CD4-positive, alpha-beta memory T cell (primary cell): ENCODE measurements at regions of chr3 and their contacts with region 1.

Region 1: GRCh38 chr3:172332256-172333041 is 115.8 kb downstream of the GHSR start:
- DNase-seq: peak; percentile 40 to 57 (median 47)
- H3K4me3 ChIP-seq: no peak overlapping the region
- H3K4me3 Mint-ChIP-seq: no peak overlapping the region
- H3K27ac ChIP-seq: no peak overlapping the region
- H3K27ac Mint-ChIP-seq: peak overlapping the region in 1 of 7 donors; percentile 15
- H3K4me1 ChIP-seq: no peaks in the 10 kb centered on the region
- H3K4me1 Mint-ChIP-seq: peaks cover 0 to 7% (median 3%) of the 10 kb centered on the region in 4 donors
- H3K27me3 ChIP-seq: no peaks in the 10 kb centered on the region
- H3K27me3 Mint-ChIP-seq: no peaks in the 10 kb centered on the region

Region 2: DNA sequence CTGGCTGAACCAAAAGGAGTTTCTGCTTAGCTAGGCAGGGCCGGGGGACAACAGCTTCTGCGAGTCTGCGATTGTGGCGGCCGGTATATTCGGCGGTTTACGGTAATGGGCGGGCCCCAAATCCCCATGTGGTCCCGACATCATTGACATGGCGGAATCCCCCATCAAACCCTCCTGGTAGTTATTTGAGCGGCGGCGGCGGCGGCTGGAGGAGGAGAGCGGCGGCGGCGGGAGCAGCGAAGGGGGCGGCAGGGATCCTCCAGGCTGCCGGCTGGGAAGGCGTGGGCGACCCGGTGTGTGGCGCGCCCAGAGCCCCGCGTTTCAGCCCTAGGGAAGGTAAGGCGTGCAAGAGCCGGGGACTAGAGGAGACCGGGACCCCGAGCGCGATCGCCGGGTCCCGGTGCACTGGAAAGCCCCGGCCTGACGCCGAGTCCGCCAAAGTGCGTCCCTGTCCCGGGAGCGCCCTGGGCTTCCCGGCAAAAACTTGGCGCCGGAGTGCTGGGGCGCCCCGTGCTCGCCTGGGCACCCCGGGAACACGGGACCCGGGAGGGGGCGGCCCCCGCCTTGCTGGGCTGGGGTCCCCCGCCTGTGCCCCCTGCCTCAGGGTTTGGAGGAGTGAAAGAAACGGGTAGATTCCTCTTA is 292.9 kb before region 1 on chr3 and contains the start of gene FNDC3B:
- CTCF ChIA-PET with region 1: interaction called, 76 read pairs
- POLR2A ChIA-PET with region 1: interaction called, 3 read pairs
- intact Hi-C with region 1: loop called (anchors 1 kb)
- DNase-seq: peak; percentile 90 to 93 (median 91)
- H3K4me3 ChIP-seq: peak within 1 kb of the TSS; percentile 61 to 62
- H3K4me3 Mint-ChIP-seq: peak within 1 kb of the TSS; percentile 94 to 99 (median 97)
- H3K27ac ChIP-seq: peak within 1 kb of the TSS; percentile 92
- H3K27ac Mint-ChIP-seq: peak within 1 kb of the TSS; percentile 94 to 99 (median 96)
- H3K4me1 ChIP-seq: peaks cover 29% of the 10 kb centered on the region
- H3K4me1 Mint-ChIP-seq: peaks cover 25 to 58% (median 37%) of the 10 kb centered on the region in 4 donors
- H3K27me3 ChIP-seq: no peaks in the 10 kb centered on the region
- H3K27me3 Mint-ChIP-seq: no peaks in the 10 kb centered on the region
- total RNA-seq, gene FNDC3B: 18.0 to 18.2 TPM

Region 3: DNA sequence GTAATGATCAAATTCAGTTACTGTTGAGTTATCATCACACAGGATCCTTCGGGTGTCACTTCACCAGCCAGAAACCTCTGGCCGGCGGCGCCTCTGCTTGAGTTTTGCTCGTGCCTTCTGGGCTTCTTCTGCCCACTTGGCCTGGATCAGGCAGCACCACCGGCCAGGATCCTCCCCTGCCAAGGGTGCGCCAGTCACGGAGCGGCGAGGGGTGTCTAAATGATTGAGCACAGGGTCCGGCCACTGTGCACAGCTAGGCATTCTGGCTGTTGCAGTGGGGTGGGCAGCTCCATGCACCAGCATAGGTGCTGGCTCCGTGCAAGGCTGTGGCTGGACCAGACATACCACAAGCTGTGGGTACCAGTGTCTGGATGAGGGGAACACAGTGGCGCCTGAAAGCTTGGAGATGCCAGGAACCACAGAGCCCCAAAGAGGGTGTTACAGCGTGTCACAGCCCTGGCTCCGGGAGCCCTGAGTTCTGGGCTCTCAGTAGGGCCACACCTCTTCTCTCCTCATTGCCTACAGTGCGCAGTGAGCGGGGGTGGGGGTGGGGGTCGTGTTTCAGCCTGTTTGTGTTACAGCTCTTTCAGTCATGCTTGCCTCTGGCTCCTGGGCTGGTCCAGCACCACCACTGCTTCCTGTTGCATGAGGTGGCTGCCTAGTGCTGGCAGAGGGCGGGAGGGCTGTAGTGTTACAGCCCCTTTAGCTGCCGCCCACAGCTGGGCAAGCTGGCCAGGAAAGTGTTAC is 123.7 kb before region 1 on chr3:
- CTCF ChIA-PET with region 1: no interaction called
- POLR2A ChIA-PET with region 1: no interaction called
- intact Hi-C with region 1: no loop called
- DNase-seq: no peak
- H3K4me3 ChIP-seq: no peak overlapping the region
- H3K4me3 Mint-ChIP-seq: no peak overlapping the region
- H3K27ac ChIP-seq: no peak overlapping the region
- H3K27ac Mint-ChIP-seq: no peak overlapping the region
- H3K4me1 ChIP-seq: no peaks in the 10 kb centered on the region
- H3K4me1 Mint-ChIP-seq: peaks cover 2 to 5% (median 4%) of the 10 kb centered on the region in 4 donors
- H3K27me3 ChIP-seq: no peaks in the 10 kb centered on the region
- H3K27me3 Mint-ChIP-seq: no peaks in the 10 kb centered on the region

Region 4: DNA sequence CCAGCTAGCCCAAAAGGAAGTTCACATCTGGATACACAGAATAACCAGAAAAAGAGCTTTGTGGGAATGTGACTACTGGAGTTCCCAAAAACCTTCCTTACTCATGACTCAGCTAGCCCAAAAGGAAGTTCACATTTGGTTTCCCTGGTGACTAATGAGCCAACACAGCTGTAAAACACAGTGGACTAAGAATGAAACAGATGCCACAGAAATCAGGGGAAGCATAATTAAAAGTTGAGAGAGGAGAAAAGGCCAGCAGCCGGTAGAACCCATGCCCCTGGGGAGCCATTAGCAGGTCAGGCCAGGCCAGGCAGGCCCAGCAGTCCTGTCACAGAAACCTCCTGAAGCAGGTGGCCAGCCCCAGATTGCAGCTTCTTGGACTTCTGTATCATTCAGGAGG is 14.5 kb before region 1 on chr3:
- CTCF ChIA-PET with region 1: interaction called, 48 read pairs
- POLR2A ChIA-PET with region 1: no interaction called
- intact Hi-C with region 1: no loop called
- DNase-seq: no peak
- H3K4me3 ChIP-seq: no peak overlapping the region
- H3K4me3 Mint-ChIP-seq: no peak overlapping the region
- H3K27ac ChIP-seq: no peak overlapping the region
- H3K27ac Mint-ChIP-seq: no peak overlapping the region
- H3K4me1 ChIP-seq: no peaks in the 10 kb centered on the region
- H3K4me1 Mint-ChIP-seq: peaks cover 0 to 4% (median 1%) of the 10 kb centered on the region in 4 donors
- H3K27me3 ChIP-seq: no peaks in the 10 kb centered on the region
- H3K27me3 Mint-ChIP-seq: no peaks in the 10 kb centered on the region

Region 5: DNA sequence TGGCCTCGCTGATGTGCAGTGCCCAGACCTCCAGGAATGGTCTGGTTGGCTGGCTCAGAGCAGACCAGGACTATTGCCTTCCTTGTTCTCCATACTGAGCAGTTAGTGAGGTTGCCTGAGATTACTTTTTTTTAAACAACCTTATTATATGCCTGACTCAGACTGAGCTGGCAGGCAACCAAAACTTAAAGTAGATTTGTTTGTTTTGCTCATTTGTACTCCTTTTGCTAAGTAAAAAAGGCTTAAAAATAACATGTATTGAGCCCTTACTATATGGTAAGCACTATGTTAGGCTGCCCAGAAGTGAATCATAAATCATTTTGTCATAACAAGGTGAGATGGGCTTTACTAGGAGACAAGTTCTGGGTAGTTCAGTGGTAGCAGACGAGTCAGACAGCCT is 23.4 kb after region 1 on chr3:
- CTCF ChIA-PET with region 1: interaction called, 11 read pairs
- POLR2A ChIA-PET with region 1: no interaction called
- intact Hi-C with region 1: no loop called
- DNase-seq: no peak
- H3K4me3 ChIP-seq: no peak overlapping the region
- H3K4me3 Mint-ChIP-seq: no peak overlapping the region
- H3K27ac ChIP-seq: no peak overlapping the region
- H3K27ac Mint-ChIP-seq: no peak overlapping the region
- H3K4me1 ChIP-seq: no peaks in the 10 kb centered on the region
- H3K4me1 Mint-ChIP-seq: peaks cover 0 to 2% (median 0%) of the 10 kb centered on the region in 4 donors
- H3K27me3 ChIP-seq: no peaks in the 10 kb centered on the region
- H3K27me3 Mint-ChIP-seq: no peaks in the 10 kb centered on the region

Region 6: GRCh38 chr3:172437713-172438112 is 105.3 kb after region 1 on chr3:
- CTCF ChIA-PET with region 1: no interaction called
- POLR2A ChIA-PET with region 1: no interaction called
- intact Hi-C with region 1: no loop called
- DNase-seq: no peak
- H3K4me3 ChIP-seq: no peak overlapping the region
- H3K4me3 Mint-ChIP-seq: no peak overlapping the region
- H3K27ac ChIP-seq: no peak overlapping the region
- H3K27ac Mint-ChIP-seq: no peak overlapping the region
- H3K4me1 ChIP-seq: no peaks in the 10 kb centered on the region
- H3K4me1 Mint-ChIP-seq: no peaks in the 10 kb centered on the region
- H3K27me3 ChIP-seq: peaks cover 5% of the 10 kb centered on the region
- H3K27me3 Mint-ChIP-seq: peaks cover 28 to 32% of the 10 kb centered on the region in 2 donors

Region 7: DNA sequence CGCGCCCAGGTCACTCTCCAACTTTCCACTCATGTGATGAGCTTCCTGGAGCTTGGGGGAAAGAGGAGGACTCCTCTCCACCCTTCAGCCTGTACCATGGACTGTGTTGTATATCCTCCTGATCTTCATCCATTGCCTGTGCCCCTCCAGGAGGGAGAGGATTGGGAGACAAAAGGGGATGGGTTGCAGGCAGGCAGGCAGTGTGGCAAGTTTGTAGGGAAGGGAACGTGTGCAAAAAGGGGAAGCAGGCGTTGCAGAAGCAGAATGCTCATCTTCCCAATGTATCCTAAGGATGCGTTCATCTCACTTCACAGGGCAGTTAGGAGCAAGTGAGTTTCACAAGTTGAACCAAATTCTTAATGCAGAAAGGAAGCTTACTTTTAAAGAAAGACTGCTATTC is 143.9 kb after region 1 on chr3:
- CTCF ChIA-PET with region 1: interaction called, 9 read pairs
- POLR2A ChIA-PET with region 1: no interaction called
- intact Hi-C with region 1: loop called (anchors 2 kb)
- DNase-seq: no peak
- H3K4me3 ChIP-seq: peak overlapping the region in 1 of 2 donors; percentile 54
- H3K4me3 Mint-ChIP-seq: peak overlapping the region; percentile 67 to 96 (median 90)
- H3K27ac ChIP-seq: peak overlapping the region; percentile 54
- H3K27ac Mint-ChIP-seq: peak overlapping the region in 6 of 7 donors; percentile 32 to 94 (median 86)
- H3K4me1 ChIP-seq: peaks cover 19% of the 10 kb centered on the region
- H3K4me1 Mint-ChIP-seq: peaks cover 14 to 22% (median 16%) of the 10 kb centered on the region in 4 donors
- H3K27me3 ChIP-seq: no peaks in the 10 kb centered on the region
- H3K27me3 Mint-ChIP-seq: peaks cover 0 to 2% of the 10 kb centered on the region in 2 donors

Region 8: GRCh38 chr3:172622916-172623700 is 290.7 kb after region 1 on chr3:
- CTCF ChIA-PET with region 1: interaction called, 13 read pairs
- POLR2A ChIA-PET with region 1: no interaction called
- intact Hi-C with region 1: loop called (anchors 1 kb)
- DNase-seq: peak in 4 of 5 donors; percentile 21 to 37 (median 30)
- H3K4me3 ChIP-seq: no peak overlapping the region
- H3K4me3 Mint-ChIP-seq: peak overlapping the region in 1 of 8 donors; percentile 68
- H3K27ac ChIP-seq: no peak overlapping the region
- H3K27ac Mint-ChIP-seq: no peak overlapping the region
- H3K4me1 ChIP-seq: no peaks in the 10 kb centered on the region
- H3K4me1 Mint-ChIP-seq: peaks cover 0 to 4% (median 2%) of the 10 kb centered on the region in 4 donors
- H3K27me3 ChIP-seq: no peaks in the 10 kb centered on the region
- H3K27me3 Mint-ChIP-seq: no peaks in the 10 kb centered on the region